ENCODE measurements at regions of chr3 and their contacts with region 1.

Region 1: GRCh38 chr3:49093853-49094767 is at the start of gene QRICH1:
- DNase-seq: peak; percentile 99
- H3K4me3 Mint-ChIP-seq: peak within 1 kb of the TSS; percentile 94
- H3K27ac Mint-ChIP-seq: peak within 1 kb of the TSS; percentile 94
- H3K4me1 Mint-ChIP-seq: peaks cover 35% of the 10 kb centered on the region
- H3K27me3 Mint-ChIP-seq: no peaks in the 10 kb centered on the region
- total RNA-seq, gene QRICH1: 100 to 111 TPM

Region 2: DNA sequence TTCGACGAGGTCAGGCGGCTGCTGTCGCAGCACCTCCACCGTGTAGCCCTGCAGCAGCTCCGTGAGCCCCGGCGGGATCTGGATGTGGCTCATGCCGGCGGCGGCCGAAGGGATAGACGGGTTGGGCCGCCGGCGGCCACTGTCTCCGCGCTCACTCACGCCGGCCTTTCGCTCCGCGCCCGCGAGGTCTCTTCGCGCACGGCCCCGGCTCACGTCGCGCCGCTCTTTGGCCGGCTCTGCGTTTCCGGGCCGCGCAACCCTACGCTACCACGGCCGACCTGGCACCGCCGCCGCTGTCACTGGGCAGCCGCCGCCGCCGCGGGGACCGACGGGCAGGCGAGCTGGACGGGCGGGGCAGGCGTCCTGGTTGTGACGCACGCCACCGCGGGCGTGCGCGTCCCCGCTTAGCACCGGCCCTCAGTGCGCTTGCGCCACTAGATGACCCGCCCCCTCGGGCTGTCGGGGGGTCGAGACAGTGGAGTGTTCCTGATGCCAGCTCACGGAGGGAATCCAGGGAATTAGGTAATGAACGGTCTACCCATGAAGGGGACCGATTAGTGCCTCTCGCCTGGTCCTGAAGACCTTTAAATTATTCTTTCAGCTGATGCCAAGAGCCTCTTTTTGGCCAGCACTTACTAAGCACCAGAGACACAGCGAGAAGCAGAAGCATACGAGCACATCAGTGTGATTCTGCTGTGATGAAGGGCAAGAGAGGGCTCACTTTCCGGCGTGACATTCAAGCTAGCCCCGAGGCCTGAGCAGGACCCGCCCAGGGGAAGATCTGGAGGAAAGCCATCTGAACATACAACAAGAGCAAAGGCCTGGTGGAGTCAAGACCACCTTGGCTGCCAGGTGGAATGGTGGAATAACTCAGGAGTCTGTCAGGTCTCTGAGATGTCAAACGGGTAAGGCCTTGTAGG is 246.3 kb before region 1 on chr3 and contains the start of gene PRKAR2A:
- CTCF ChIA-PET with region 1: no interaction called
- intact Hi-C with region 1: loop called (anchors 2 kb)
- DNase-seq: peak; percentile 81
- H3K4me3 Mint-ChIP-seq: peak within 1 kb of the TSS; percentile 84
- H3K27ac Mint-ChIP-seq: peak within 1 kb of the TSS; percentile 80
- H3K4me1 Mint-ChIP-seq: peaks cover 29% of the 10 kb centered on the region
- H3K27me3 Mint-ChIP-seq: no peaks in the 10 kb centered on the region
- total RNA-seq, gene PRKAR2A: 18.5 to 21.7 TPM

Region 3: DNA sequence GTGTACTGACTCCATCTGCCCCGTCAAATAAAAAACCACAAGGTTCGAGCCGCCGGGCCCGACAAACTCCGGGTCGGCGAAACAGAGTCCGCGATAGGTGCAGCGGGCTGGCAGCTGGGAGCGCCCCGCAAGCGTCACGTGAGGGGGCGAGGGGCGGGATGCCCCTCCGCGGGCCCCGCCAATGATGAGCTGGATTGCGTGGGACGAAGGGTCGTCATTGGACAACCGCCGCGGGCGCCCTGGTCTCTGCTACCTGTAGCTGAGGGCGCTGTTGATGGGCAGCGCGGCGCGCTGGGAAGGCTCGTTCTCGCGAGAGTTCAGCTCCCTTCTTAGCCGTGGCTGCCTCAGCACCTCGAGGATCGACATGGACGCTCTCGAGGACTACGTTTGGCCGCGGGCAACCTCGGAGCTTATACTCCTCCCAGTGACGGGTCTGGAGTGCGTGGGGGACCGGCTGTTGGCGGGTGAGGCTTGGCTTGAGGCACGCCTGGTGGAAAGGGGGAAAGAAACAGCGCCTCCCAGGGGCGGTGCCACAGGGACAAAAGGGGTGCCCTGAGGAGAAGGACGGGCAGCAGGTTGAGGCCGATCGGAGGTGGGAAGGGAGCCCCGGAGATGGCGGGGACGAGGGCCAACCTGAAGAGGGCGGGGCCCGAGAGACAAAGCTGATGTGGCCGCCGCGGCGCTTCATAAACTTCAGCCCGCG is 86.9 kb before region 1 on chr3 and contains the start of gene WDR6:
- CTCF ChIA-PET with region 1: no interaction called
- intact Hi-C with region 1: loop called (anchors 1 kb)
- DNase-seq: peak; percentile 99
- H3K4me3 Mint-ChIP-seq: peak within 1 kb of the TSS; percentile 99
- H3K27ac Mint-ChIP-seq: peak within 1 kb of the TSS; percentile 99
- H3K4me1 Mint-ChIP-seq: peaks cover 19% of the 10 kb centered on the region
- H3K27me3 Mint-ChIP-seq: no peaks in the 10 kb centered on the region
- total RNA-seq, gene WDR6: 119 to 120 TPM

Region 4: DNA sequence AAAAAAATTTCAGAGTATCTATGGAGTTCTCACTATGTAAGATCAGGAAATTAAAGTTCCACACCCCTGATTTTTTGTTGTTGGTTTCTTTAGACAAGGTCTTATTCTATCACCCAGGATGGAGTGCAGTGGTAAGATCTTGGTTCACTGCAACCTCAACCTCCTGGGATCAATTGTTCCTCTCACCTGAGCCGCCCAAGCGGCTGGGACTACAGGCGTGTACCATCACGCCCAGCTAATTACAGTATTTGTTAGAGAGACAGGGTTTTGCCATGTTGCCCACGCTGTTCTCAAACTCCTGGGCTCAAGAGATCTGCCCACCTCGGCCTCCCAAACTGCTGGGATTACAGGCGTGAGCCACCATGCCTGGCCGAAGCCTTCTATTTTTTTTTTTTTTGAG is 12.7 kb before region 1 on chr3:
- CTCF ChIA-PET with region 1: interaction called, 11 read pairs
- intact Hi-C with region 1: no loop called
- DNase-seq: no peak
- H3K4me3 Mint-ChIP-seq: no peak overlapping the region
- H3K27ac Mint-ChIP-seq: no peak overlapping the region
- H3K4me1 Mint-ChIP-seq: peaks cover 9% of the 10 kb centered on the region
- H3K27me3 Mint-ChIP-seq: no peaks in the 10 kb centered on the region

Region 5: DNA sequence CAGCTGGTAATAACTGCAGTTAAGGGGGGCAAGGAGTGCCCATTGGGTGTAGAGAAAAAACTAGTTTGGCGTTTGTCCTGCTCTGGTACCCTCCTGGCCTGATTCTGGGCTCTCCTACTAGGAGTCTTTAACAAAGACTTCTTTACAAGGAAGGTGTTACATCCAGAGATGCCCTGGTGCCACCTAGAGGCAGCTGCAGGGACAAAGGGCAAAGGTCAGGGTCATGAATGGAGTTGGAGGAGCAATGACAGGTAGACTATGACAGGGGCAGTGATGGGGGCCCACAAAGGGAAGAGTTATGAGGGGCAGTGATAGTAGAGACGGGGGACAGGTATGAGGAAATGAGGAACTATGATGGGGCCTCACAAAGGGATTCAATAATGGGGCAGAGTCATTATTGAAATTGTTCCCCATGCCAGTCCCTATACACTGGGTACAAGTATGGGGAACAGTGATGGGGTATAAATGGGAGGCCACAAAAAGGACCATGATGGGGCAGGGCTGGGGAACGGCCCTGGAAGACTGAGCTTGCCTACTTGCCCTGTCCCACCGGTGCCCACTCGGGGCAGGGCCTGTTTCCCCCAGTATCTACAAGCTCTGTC is 64.1 kb after region 1 on chr3:
- CTCF ChIA-PET with region 1: interaction called, 6 read pairs
- intact Hi-C with region 1: loop called (anchors 2 kb)
- DNase-seq: peak; percentile 85
- H3K4me3 Mint-ChIP-seq: no peak overlapping the region
- H3K27ac Mint-ChIP-seq: no peak overlapping the region
- H3K4me1 Mint-ChIP-seq: peaks cover 10% of the 10 kb centered on the region
- H3K27me3 Mint-ChIP-seq: no peaks in the 10 kb centered on the region

Region 6: DNA sequence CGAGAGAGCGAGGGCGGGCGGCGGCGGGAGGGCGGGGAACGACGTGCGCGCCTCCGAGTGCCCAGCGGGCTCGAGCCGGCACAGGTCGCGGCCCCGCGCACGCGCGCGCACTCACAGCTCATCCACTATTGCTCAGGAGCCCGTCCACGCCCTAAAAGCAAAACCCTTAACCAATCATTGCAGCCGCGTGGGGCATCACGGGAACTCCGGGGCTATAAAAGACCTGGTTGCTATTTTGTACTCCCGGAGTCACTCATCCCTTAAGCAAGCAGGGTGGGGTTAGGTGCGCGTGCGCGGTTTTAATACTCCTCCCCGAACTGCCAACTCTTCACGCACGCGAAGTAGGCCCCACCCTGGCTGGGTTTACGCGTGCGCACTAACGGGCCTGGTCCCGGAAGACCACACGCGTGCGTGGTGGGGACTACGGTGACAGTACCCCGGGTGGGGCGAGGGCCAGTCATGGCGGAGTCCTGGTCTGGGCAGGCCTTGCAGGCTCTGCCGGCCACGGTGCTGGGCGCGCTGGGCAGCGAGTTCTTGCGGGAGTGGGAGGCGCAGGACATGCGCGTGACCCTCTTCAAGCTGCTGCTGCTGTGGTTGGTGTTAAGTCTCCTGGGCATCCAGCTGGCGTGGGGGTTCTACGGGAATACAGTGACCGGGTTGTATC is 318.0 kb after region 1 on chr3 and contains the starts of genes RHOA and TCTA:
- CTCF ChIA-PET with region 1: no interaction called
- intact Hi-C with region 1: loop called (anchors 1 kb)
- DNase-seq: peak; percentile 99
- H3K4me3 Mint-ChIP-seq: peak within 1 kb of the TSS; percentile 94
- H3K27ac Mint-ChIP-seq: peak within 1 kb of the TSS; percentile 92
- H3K4me1 Mint-ChIP-seq: peaks cover 65% of the 10 kb centered on the region
- H3K27me3 Mint-ChIP-seq: no peaks in the 10 kb centered on the region
- total RNA-seq, gene RHOA: 463 to 491 TPM
- total RNA-seq, gene TCTA: 9.4 to 9.5 TPM